ENCODE measurements at regions of chr12 and their contacts with region 1.

Region 1: DNA sequence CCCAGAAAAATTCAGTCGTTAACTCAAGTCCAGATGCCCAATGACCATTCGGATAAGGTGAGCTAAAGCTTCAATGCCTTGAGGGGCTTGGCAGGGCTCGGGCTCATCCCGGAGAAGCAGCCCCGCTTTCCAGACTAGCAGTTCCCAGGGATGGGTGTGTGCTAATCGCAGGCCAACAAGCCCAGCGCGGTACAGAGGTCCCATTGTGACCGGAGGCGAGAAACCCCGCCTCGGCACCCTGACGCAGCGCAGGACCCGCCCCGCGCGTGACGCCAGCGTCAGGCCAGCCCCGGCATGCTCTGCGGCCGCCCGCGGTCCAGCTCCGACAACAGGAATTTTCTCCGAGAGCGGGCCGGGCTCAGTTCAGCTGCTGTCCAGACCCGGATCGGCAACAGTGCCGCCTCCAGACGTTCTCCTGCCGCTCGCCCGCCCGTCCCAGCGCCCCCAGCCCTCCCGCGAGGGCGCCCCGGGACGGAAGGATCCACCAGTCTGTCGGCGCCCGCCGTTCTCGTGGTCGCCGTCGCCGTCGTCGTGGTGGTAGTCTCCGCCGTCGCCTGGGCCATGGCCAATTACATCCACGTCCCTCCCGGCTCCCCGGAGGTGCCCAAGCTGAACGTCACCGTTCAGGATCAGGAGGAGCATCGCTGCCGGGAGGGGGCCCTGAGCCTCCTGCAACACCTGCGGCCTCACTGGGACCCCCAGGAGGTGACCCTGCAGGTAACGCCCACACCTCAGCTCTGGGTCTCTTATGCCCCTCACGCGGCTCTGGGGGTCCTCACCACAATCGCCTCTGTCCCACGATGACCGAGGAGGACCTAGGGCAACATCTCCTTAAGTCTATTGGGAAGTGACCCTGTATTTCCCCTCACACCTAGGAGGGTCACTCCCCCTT is at the start of gene ETNK1:
- DNase-seq: peak; percentile 98
- ATAC-seq: peak; percentile 100
- total RNA-seq, gene ETNK1: 19.0 TPM

Region 2: DNA sequence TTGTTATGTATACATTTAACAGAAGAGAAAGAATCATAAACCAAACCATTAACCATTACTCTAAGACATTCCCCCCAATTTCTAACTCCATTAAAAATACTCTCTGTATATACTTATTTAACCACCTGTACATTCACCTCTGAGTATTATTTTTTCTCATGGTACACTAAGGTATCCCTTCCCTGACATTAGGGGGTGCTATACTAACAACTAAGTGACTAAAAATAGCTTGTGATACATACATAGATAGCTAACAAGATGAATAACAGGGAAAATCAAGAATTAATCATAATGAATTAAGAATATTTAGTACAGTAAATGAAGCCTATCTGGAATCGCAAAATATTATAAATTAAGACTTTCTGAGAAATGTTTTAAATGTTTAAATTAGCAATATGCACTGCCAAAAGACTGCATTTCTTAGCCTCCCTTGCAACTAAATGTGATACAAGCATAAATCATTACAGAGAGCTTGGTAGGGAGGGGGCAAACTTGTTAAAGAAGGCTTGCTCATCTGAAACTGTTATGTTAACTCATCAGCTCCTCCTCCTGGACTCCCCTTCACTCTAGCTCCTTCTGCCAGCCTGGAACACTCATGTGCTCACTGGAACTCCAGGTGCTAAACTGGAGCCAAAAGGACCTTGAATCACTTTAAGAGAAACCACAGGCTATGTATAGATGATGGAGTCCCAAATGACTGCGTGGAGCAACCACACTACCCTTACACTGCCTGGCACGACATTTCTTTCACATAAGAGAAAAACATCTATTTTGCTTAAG is 95.6 kb before region 1 on chr12:
- intact Hi-C with region 1: no loop called
- DNase-seq: no peak
- ATAC-seq: no peak

Region 3: DNA sequence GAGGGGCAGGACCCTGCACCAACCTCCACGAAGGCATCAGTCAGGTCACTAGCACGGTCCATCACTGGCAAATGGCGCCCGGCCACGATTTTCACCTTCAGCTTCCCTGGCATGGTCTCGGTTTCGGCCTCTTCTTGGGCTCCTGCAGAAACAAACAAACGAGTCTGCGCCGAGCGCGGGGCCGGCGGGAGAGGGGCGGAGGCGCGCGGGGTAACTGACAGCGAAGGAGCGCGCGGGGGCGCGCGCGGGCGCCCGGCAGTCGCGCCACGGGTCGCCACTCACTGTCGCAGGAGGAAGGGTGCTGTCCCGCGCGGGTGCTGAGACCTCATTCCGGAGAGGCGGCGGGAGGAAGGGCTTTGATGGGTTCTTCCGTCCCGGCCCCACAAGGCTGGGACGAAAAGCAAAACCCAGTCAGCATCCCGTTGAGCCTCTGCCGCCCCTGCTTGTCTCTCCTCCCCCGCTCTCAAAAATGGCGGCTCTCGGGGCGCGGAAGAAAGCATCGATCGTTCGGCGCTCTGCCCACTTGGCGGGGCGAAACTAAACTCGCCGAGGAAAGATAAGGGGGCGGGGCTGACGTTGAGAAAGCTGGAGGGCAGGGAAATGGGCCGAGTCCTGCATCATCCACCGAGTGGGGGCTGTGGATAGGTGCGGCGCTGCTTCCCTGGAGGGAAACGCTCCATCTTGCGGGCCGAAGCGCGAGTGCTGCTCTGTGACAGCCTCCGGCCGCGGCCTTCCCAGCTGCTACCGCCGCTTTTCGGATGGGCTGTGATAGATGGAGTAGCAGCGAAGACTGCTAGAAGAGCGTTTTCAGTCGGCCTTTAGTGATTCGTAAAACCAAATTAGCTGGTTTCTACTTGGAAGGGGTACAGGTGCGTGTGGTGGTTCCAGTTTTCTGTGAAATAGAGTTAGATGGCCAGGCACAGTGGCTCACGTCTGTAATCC is 80.8 kb before region 1 on chr12 and contains the start of gene C2CD5:
- intact Hi-C with region 1: loop called (anchors 10 kb)
- DNase-seq: peak; percentile 97
- ATAC-seq: peak; percentile 97
- total RNA-seq, gene C2CD5: 25.4 TPM

Region 4: GRCh38 chr12:23424685-23425084 is 799.6 kb after region 1 on chr12:
- intact Hi-C with region 1: no loop called
- DNase-seq: no peak
- ATAC-seq: no peak

Measured in left ventricle myocardium superior (tissue), 1 donor.